Activated naive CD4-positive, alpha-beta T cell treated with anti-CD3 and anti-CD28 coated beads for 36 hours (primary cell): ENCODE measurements at regions of chr3 and their contacts with region 1.

Region 1: GRCh38 chr3:172666873-172667694 is 43.8 kb downstream of the NCEH1 start:
- DNase-seq: peak; percentile 92
- H3K4me3 Mint-ChIP-seq: no peak overlapping the region
- H3K27ac Mint-ChIP-seq: no peak overlapping the region
- H3K4me1 Mint-ChIP-seq: peaks cover 11% of the 10 kb centered on the region
- H3K27me3 Mint-ChIP-seq: no peaks in the 10 kb centered on the region

Region 2: GRCh38 chr3:170908235-170909116 is 1758.6 kb before region 1 on chr3 and contains the start of gene EIF5A2:
- CTCF ChIA-PET with region 1: no interaction called
- intact Hi-C with region 1: no loop called
- DNase-seq: peak; percentile 97
- H3K4me3 Mint-ChIP-seq: peak within 1 kb of the TSS; percentile 95
- H3K27ac Mint-ChIP-seq: peak within 1 kb of the TSS; percentile 80
- H3K4me1 Mint-ChIP-seq: peaks cover 22% of the 10 kb centered on the region
- H3K27me3 Mint-ChIP-seq: no peaks in the 10 kb centered on the region
- total RNA-seq, gene EIF5A2: 3.4 to 5.2 TPM

Region 3: GRCh38 chr3:171646357-171647133 is 1020.5 kb before region 1 on chr3:
- CTCF ChIA-PET with region 1: no interaction called
- intact Hi-C with region 1: loop called (anchors 10 kb)
- DNase-seq: no peak
- H3K4me3 Mint-ChIP-seq: no peak overlapping the region
- H3K27ac Mint-ChIP-seq: no peak overlapping the region
- H3K4me1 Mint-ChIP-seq: no peaks in the 10 kb centered on the region
- H3K27me3 Mint-ChIP-seq: no peaks in the 10 kb centered on the region

Region 4: GRCh38 chr3:172039436-172040077 is 627.5 kb before region 1 on chr3 and contains the start of gene FNDC3B:
- CTCF ChIA-PET with region 1: no interaction called
- intact Hi-C with region 1: loop called (anchors 5 kb)
- DNase-seq: peak; percentile 96
- H3K4me3 Mint-ChIP-seq: peak within 1 kb of the TSS; percentile 91
- H3K27ac Mint-ChIP-seq: peak within 1 kb of the TSS; percentile 89
- H3K4me1 Mint-ChIP-seq: peaks cover 21% of the 10 kb centered on the region
- H3K27me3 Mint-ChIP-seq: no peaks in the 10 kb centered on the region
- total RNA-seq, gene FNDC3B: 9.2 to 13.5 TPM

Region 5: DNA sequence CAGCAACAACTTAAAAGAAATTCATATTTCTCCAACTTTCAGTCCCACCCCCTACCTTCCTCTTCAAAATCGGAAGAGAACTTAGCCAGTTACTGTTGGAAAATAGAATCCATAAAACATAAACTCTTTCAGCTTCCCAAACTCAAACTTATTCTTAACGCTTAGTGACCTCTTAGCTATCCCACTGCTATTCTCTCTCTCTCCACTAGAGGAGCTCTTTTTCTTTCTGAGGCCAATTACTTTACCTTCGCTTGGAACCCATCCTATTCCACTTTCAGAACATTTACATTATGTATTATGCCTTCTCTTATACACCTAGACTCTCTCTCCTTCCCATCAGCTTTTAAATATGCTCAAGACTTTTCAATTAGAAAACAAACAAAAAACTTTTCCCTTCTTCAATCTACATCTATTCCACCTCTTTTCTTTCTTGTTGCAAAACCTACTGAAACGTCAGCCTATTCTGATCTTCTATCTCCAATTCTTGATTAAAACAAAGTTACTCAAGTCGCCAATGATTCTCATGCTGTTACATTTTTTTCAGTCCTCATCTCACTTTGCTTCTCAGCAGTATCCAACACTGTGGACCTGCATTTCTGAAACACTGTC is 205.4 kb before region 1 on chr3:
- CTCF ChIA-PET with region 1: interaction called, 6 read pairs
- intact Hi-C with region 1: loop called (anchors 2 kb)
- DNase-seq: no peak
- H3K4me3 Mint-ChIP-seq: no peak overlapping the region
- H3K27ac Mint-ChIP-seq: no peak overlapping the region
- H3K4me1 Mint-ChIP-seq: peaks cover 4% of the 10 kb centered on the region
- H3K27me3 Mint-ChIP-seq: no peaks in the 10 kb centered on the region

Region 6: GRCh38 chr3:172476347-172476746 is 190.7 kb before region 1 on chr3:
- CTCF ChIA-PET with region 1: interaction called, 3 read pairs
- intact Hi-C with region 1: loop called (anchors 5 kb)
- DNase-seq: no peak
- H3K4me3 Mint-ChIP-seq: no peak overlapping the region
- H3K27ac Mint-ChIP-seq: no peak overlapping the region
- H3K4me1 Mint-ChIP-seq: peaks cover 14% of the 10 kb centered on the region
- H3K27me3 Mint-ChIP-seq: no peaks in the 10 kb centered on the region

Region 7: DNA sequence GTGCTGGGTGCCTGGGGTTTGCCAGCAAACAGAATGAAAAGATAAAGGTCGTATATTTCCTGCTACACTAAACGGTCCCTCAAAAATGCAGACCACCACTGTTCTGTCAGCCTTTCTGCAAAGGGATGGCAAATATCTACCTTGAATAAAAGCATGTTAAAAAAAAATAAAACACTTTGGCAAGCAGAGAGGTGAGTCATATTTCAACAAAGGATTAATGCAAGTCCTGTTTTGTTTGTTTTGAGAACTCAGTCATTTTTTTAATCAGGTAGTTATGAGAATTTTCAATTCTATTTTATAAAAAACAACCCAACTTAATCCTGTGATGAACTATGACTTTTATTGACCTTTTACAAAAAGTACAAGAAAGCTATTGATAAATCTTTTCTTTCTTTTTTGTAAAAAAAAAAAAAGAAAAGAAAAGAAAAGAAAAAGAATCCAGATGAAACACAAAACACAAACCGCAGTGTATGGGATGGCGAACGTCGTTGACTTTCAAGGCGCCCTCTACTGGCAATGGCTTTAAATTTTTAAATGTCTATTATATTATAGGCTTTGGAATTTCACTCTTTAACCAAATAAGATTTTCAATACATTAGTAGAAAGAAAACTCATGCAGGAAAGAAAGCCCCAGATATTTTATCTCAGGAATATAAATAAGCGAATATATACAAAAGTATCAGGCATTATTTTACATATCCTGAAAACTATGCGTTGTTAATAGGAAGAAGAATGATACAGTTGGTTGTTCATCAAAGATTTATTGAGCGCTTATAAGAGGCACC is 44.0 kb before region 1 on chr3:
- CTCF ChIA-PET with region 1: interaction called, 8 read pairs
- intact Hi-C with region 1: loop called (anchors 2 kb)
- DNase-seq: peak; percentile 64
- H3K4me3 Mint-ChIP-seq: no peak overlapping the region
- H3K27ac Mint-ChIP-seq: no peak overlapping the region
- H3K4me1 Mint-ChIP-seq: peaks cover 11% of the 10 kb centered on the region
- H3K27me3 Mint-ChIP-seq: no peaks in the 10 kb centered on the region

Region 8: GRCh38 chr3:172991424-172991996 is 324.4 kb after region 1 on chr3:
- CTCF ChIA-PET with region 1: no interaction called
- intact Hi-C with region 1: no loop called
- DNase-seq: no peak
- H3K4me3 Mint-ChIP-seq: no peak overlapping the region
- H3K27ac Mint-ChIP-seq: no peak overlapping the region
- H3K4me1 Mint-ChIP-seq: no peaks in the 10 kb centered on the region
- H3K27me3 Mint-ChIP-seq: no peaks in the 10 kb centered on the region